ENCODE measurements at regions of chr9 and their contacts with region 1.

Region 1: DNA sequence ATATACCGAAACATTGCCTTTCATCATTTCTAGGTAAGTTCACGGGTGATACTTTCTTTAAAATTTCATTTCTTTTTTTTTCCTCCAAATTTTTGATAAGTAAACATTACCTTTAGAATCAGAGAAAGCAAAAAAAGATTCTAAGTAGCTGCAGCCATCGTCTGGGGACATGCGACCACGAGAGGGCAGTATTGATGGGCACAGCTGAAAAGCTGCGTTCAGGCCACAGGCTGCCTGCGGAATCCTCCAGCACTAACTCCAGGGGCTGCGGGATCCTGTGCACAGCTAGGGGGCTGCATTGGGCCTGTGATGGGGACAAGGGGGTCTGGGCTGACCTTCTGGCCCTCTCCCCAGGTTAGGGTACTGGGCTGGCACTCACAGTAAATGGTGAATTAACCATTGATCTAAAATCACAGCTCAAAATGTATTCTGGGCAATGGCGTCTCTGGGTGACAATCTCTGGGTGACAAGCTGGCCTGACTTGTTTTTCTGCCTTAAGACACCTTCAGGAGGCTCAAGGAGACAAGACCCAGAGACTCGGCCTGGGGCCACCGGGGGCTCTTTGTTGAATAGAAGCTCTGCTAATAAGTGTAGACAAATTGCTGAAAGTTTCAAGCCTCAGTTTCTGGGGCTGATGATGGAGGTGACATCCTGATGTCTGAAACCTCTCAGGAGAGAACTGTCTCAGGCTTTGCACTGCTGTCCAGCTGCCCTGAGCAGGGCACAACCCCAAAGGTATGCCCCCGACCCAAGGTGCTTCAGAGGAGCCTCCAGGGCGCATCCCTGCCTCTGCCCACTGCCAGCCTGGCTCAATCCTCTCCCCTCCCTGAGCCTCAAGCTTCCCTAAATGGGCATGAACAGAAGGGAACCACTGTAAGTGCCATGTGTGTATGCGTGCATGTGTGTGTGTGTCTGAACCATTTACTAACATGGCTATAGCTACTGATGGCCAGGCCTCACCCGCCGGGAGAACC is 44.3 kb upstream of the SARDH start:
- DNase-seq: peak; percentile 75
- H3K4me3 Mint-ChIP-seq: no peak overlapping the region
- H3K27ac Mint-ChIP-seq: no peak overlapping the region
- H3K4me1 Mint-ChIP-seq: no peaks in the 10 kb centered on the region
- H3K27me3 Mint-ChIP-seq: no peaks in the 10 kb centered on the region

Region 2: GRCh38 chr9:133742849-133743444 is 39.5 kb before region 1 on chr9:
- CTCF ChIA-PET with region 1: interaction called, 13 read pairs
- POLR2A ChIA-PET with region 1: no interaction called
- intact Hi-C with region 1: no loop called
- DNase-seq: peak; percentile 81
- H3K4me3 Mint-ChIP-seq: no peak overlapping the region
- H3K27ac Mint-ChIP-seq: no peak overlapping the region
- H3K4me1 Mint-ChIP-seq: peaks cover 2% of the 10 kb centered on the region
- H3K27me3 Mint-ChIP-seq: peaks cover 7% of the 10 kb centered on the region

Region 3: DNA sequence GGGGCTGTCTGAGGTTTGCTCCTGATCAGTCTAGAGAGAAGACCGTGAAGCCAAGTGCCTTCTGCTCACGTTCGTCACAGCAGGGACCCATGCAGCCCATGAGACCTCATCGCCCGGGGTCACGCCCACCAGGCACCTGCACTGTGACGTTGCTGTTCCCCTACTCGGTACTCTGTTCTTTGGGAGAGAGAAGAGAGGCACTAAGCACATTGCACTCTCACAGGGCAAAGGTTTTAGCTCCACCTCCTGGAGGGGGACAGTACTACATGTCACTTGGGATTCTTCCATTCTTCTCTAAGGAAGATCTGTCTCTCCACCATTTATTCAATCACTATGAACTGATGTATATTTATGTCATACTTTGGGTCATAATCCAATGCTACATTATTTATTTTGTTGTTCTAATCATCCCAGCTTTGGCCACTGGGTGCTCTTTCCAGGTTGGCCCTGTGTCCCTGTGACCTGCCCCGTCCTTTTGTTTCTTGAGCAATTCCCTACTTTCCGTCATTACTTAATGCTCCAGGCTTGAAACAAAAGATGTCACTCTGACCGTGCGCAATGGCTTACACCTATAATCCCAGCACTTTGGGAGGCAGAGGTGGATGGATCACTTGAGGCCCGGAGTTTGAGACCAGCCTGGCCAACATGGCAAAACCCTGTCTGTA is 316.8 kb after region 1 on chr9:
- CTCF ChIA-PET with region 1: interaction called, 4 read pairs
- POLR2A ChIA-PET with region 1: no interaction called
- intact Hi-C with region 1: loop called (anchors 1 kb)
- DNase-seq: peak; percentile 61
- H3K4me3 Mint-ChIP-seq: no peak overlapping the region
- H3K27ac Mint-ChIP-seq: no peak overlapping the region
- H3K4me1 Mint-ChIP-seq: no peaks in the 10 kb centered on the region
- H3K27me3 Mint-ChIP-seq: peaks cover 5% of the 10 kb centered on the region

Measured in activated CD4-positive, alpha-beta memory T cell treated with anti-CD3 and anti-CD28 coated beads for 36 hours (primary cell).